ENCODE measurements at regions of chr5 and their contacts with region 1.

Region 1: GRCh38 chr5:141960449-141961202 is 2.6 kb upstream of the PCDH12 start:
- DNase-seq: peak; percentile 85 to 89 (median 88)
- H3K4me3 ChIP-seq: no peak overlapping the region
- H3K4me3 Mint-ChIP-seq: peak overlapping the region in 7 of 8 donors; percentile 33 to 66 (median 57)
- H3K27ac ChIP-seq: peak overlapping the region; percentile 22
- H3K27ac Mint-ChIP-seq: peak overlapping the region; percentile 69 to 92 (median 87)
- H3K4me1 ChIP-seq: peaks cover 45% of the 10 kb centered on the region
- H3K4me1 Mint-ChIP-seq: peaks cover 28 to 45% (median 38%) of the 10 kb centered on the region in 4 donors
- H3K27me3 ChIP-seq: no peaks in the 10 kb centered on the region
- H3K27me3 Mint-ChIP-seq: no peaks in the 10 kb centered on the region

Region 2: DNA sequence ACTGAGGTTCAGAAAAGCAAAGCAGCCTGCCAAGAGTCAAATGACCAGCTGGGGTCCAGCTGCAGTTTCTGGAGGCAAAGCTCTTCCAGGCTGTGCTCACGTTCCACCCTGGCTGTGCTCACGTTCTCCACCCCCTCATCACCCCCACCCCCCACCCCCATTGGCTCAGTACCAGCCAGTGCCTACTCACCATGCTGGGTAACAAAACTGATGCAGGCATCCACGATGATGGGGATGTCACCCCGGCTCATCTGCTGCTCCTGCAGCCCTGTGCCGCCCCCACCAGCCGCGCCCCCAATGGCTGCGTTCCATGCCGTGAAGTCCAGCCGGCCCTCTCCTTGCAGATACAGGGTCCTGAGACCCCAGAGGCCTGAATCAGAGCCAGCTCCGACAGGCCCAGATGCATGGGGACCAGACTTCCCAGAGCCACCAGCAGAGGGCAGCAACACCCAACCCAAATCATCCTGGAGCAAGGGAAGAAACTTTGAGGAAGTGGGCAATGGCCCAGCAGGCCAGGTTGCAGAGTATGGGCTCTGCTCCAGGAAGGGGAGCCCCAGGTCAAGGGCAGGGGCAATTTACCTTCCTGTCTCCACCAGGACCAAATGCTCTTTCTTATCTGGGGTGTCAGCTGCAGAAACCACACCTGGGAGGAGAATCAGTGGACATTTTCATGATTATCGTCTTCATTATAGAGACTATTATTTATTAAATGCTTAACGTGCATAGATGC is 295.7 kb before region 1 on chr5:
- CTCF ChIA-PET with region 1: interaction called, 32 read pairs
- POLR2A ChIA-PET with region 1: interaction called, 3 read pairs
- intact Hi-C with region 1: loop called (anchors 1 kb)
- DNase-seq: peak; percentile 58 to 69 (median 59)
- H3K4me3 ChIP-seq: no peak overlapping the region
- H3K4me3 Mint-ChIP-seq: no peak overlapping the region
- H3K27ac ChIP-seq: no peak overlapping the region
- H3K27ac Mint-ChIP-seq: no peak overlapping the region
- H3K4me1 ChIP-seq: no peaks in the 10 kb centered on the region
- H3K4me1 Mint-ChIP-seq: peaks cover 2 to 5% (median 4%) of the 10 kb centered on the region in 4 donors
- H3K27me3 ChIP-seq: no peaks in the 10 kb centered on the region
- H3K27me3 Mint-ChIP-seq: no peaks in the 10 kb centered on the region

Region 3: DNA sequence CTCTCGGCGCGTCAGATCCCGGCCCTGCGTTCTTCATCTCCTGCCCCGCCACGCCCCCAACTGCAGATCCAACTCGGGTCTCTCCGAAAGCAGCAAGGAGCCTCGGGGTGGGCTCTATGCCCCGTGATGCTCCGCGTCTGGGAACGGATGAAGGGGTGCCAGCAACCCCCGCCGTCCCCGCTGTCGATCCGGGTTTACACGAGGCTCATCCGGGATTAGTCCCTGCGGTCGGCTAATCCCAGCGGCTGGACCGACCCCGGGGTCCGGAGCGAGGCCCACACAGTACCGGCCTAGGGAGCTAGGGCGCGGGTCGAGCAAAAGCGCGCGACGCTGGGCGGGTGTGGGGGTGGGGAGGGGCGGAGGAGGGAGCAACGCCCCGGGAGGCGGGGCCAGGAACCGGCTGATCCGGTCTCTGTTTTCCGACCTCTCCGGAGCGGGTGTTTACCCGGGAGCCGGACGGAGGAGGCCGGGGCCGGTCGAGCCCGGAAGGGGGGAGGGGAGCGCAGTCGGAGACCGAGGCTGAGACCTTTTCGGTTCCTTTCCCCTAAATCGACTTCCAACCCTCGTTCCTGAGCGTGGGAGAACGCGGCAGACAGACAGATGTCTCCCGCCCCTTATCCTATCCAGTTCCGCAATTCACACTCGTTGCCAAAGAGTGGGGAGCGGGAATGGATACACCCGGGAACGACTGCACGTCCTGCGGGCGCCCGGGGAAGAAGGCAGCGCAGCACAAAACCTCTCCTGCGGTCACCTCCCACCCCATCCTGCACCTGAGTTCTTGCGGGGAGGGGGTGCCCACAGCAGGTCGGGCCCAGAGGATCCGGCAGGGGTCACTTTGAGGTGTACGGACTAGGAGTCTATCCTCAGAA is 111.0 kb before region 1 on chr5:
- CTCF ChIA-PET with region 1: interaction called, 4 read pairs
- POLR2A ChIA-PET with region 1: interaction called, 10 read pairs
- intact Hi-C with region 1: no loop called
- DNase-seq: peak; percentile 54 to 74 (median 56)
- H3K4me3 ChIP-seq: peak overlapping the region; percentile 83 to 88
- H3K4me3 Mint-ChIP-seq: peak overlapping the region; percentile 90 to 93 (median 92)
- H3K27ac ChIP-seq: peak overlapping the region; percentile 66
- H3K27ac Mint-ChIP-seq: peak overlapping the region; percentile 75 to 93 (median 88)
- H3K4me1 ChIP-seq: peaks cover 9% of the 10 kb centered on the region
- H3K4me1 Mint-ChIP-seq: peaks cover 5 to 14% (median 11%) of the 10 kb centered on the region in 4 donors
- H3K27me3 ChIP-seq: no peaks in the 10 kb centered on the region
- H3K27me3 Mint-ChIP-seq: peaks cover 1 to 5% of the 10 kb centered on the region in 2 donors

Region 4: GRCh38 chr5:141914199-141914743 is 46.4 kb before region 1 on chr5:
- CTCF ChIA-PET with region 1: interaction called, 10 read pairs
- POLR2A ChIA-PET with region 1: no interaction called
- intact Hi-C with region 1: no loop called
- DNase-seq: no peak
- H3K4me3 ChIP-seq: no peak overlapping the region
- H3K4me3 Mint-ChIP-seq: peak overlapping the region in 4 of 8 donors; percentile 13 to 67 (median 34)
- H3K27ac ChIP-seq: no peak overlapping the region
- H3K27ac Mint-ChIP-seq: no peak overlapping the region
- H3K4me1 ChIP-seq: peaks cover 12% of the 10 kb centered on the region
- H3K4me1 Mint-ChIP-seq: peaks cover 0 to 16% (median 7%) of the 10 kb centered on the region in 4 donors
- H3K27me3 ChIP-seq: peaks cover 16% of the 10 kb centered on the region
- H3K27me3 Mint-ChIP-seq: peaks cover 22 to 26% of the 10 kb centered on the region in 2 donors

Region 5: DNA sequence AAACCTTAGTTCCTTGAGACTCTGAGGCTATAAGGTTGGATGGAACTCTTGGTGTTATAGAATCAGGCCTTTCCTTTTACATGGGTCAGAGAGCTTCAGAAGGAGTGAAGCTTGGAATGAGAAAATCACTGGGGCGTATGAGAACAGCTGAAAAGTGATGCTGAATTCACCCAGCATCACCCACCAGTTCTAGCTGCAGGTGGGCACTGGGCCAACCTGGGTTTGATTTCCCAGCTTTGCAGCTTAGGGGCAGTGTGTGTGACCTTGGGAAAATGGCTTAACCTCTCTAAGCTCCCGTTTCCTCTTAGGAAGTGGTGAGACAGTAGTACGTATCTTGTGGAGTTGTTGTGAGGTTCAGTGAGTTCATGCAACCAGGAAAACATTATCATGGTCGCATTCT is 13.3 kb before region 1 on chr5:
- CTCF ChIA-PET with region 1: interaction called, 53 read pairs
- POLR2A ChIA-PET with region 1: interaction called, 7 read pairs
- intact Hi-C with region 1: no loop called
- DNase-seq: no peak
- H3K4me3 ChIP-seq: no peak overlapping the region
- H3K4me3 Mint-ChIP-seq: no peak overlapping the region
- H3K27ac ChIP-seq: no peak overlapping the region
- H3K27ac Mint-ChIP-seq: peak overlapping the region in 1 of 7 donors; percentile 81
- H3K4me1 ChIP-seq: peaks cover 5% of the 10 kb centered on the region
- H3K4me1 Mint-ChIP-seq: peaks cover 3 to 11% (median 6%) of the 10 kb centered on the region in 4 donors
- H3K27me3 ChIP-seq: no peaks in the 10 kb centered on the region
- H3K27me3 Mint-ChIP-seq: no peaks in the 10 kb centered on the region

Region 6: GRCh38 chr5:142053426-142054151 is 93.0 kb after region 1 on chr5:
- CTCF ChIA-PET with region 1: no interaction called
- POLR2A ChIA-PET with region 1: no interaction called
- intact Hi-C with region 1: no loop called
- DNase-seq: no peak
- H3K4me3 ChIP-seq: no peak overlapping the region
- H3K4me3 Mint-ChIP-seq: no peak overlapping the region
- H3K27ac ChIP-seq: no peak overlapping the region
- H3K27ac Mint-ChIP-seq: peak overlapping the region in 3 of 7 donors; percentile 44 to 73 (median 47)
- H3K4me1 ChIP-seq: no peaks in the 10 kb centered on the region
- H3K4me1 Mint-ChIP-seq: peaks cover 3 to 10% (median 4%) of the 10 kb centered on the region in 4 donors
- H3K27me3 ChIP-seq: no peaks in the 10 kb centered on the region
- H3K27me3 Mint-ChIP-seq: no peaks in the 10 kb centered on the region

Region 7: GRCh38 chr5:142145106-142145900 is 184.7 kb after region 1 on chr5:
- CTCF ChIA-PET with region 1: interaction called, 13 read pairs
- POLR2A ChIA-PET with region 1: interaction called, 4 read pairs
- intact Hi-C with region 1: no loop called
- DNase-seq: peak; percentile 54 to 66 (median 57)
- H3K4me3 ChIP-seq: no peak overlapping the region
- H3K4me3 Mint-ChIP-seq: no peak overlapping the region
- H3K27ac ChIP-seq: no peak overlapping the region
- H3K27ac Mint-ChIP-seq: no peak overlapping the region
- H3K4me1 ChIP-seq: no peaks in the 10 kb centered on the region
- H3K4me1 Mint-ChIP-seq: no peaks in the 10 kb centered on the region
- H3K27me3 ChIP-seq: no peaks in the 10 kb centered on the region
- H3K27me3 Mint-ChIP-seq: no peaks in the 10 kb centered on the region